ENCODE measurements at regions of chr1 and their contacts with region 1.

Region 1: GRCh38 chr1:46247436-46248121 is at the start of gene RAD54L:
- DNase-seq: peak; percentile 99
- ATAC-seq: peak; percentile 94
- H3K4me3 Mint-ChIP-seq: peak within 1 kb of the TSS; percentile 83
- H3K27ac Mint-ChIP-seq: peak within 1 kb of the TSS; percentile 92
- H3K4me1 Mint-ChIP-seq: peaks cover 20% of the 10 kb centered on the region
- H3K27me3 Mint-ChIP-seq: no peaks in the 10 kb centered on the region
- total RNA-seq, gene RAD54L: 64.2 to 73.4 TPM

Region 2: DNA sequence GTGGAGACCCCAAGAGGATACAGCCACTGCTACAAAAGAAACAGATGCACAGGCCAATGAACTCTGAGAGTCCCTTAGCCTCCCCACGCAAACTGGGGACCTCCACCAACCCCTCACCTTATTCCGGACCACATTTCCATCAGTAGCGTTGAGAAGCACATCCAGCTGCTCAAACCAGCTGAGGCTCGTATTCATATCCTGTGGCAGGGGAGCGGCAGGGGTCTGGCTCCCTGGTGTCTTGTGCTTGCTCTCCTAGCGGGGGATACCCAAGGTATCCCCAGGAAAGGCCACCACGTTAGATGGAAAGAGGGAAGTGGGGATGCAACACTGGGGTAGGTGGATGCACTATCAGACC is 748.2 kb before region 1 on chr1:
- CTCF ChIA-PET with region 1: no interaction called
- POLR2A ChIA-PET with region 1: no interaction called
- intact Hi-C with region 1: loop called in 1 of 2 experiments (anchors 1 kb)
- DNase-seq: peak; percentile 45
- ATAC-seq: no peak
- H3K4me3 Mint-ChIP-seq: peak overlapping the region; percentile 81
- H3K27ac Mint-ChIP-seq: peak overlapping the region; percentile 92
- H3K4me1 Mint-ChIP-seq: peaks cover 23% of the 10 kb centered on the region
- H3K27me3 Mint-ChIP-seq: no peaks in the 10 kb centered on the region

Region 3: GRCh38 chr1:45803301-45803780 is 444.2 kb before region 1 on chr1 and contains the start of gene MAST2:
- CTCF ChIA-PET with region 1: no interaction called
- POLR2A ChIA-PET with region 1: no interaction called
- intact Hi-C with region 1: loop called in 1 of 2 experiments (anchors 2 kb)
- DNase-seq: peak; percentile 92
- ATAC-seq: peak; percentile 96
- H3K4me3 Mint-ChIP-seq: peak within 1 kb of the TSS; percentile 98
- H3K27ac Mint-ChIP-seq: peak within 1 kb of the TSS; percentile 82
- H3K4me1 Mint-ChIP-seq: peaks cover 27% of the 10 kb centered on the region
- H3K27me3 Mint-ChIP-seq: no peaks in the 10 kb centered on the region
- total RNA-seq, gene MAST2: 20.1 to 22.9 TPM

Region 4: DNA sequence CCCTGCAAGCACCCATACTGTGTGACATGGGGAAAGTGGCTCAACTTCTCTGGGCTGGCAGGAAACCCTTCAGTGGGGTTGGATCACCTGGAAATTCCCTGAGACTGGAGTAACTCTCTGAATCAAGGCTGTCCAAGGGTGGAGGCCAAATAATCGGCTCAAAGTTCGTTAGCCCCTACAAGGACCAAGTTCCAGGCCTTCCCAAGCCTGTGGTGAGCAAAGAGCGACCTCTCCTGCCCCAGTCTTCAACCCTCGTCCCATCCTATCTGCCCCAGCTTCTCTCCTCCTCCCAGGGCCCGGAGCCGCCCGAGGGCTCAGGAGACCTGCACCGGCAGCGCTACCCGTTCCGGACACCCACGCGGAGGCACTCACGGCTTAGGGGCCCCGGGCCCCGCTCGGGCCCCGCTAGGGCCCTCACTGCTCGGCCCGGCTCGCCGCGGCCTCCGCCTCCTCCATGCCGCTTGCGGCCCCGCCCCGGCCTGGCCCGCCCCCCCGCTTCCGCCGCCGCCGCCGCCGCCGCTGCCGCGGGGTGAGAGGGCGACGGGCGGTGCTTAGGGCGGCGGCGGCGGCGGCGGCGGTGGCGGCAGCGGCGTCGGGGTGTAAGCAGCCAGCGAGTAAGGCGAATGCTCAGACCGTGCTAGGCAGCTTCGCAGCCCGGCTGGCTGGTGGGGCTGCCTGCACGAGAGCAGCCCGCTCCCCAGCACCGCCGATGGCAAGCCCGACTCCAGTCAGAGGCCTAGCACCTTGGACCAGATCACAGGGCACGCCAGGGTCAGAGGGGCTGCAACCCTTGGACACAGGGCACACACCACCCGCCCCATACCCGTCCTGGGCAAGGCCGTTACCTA is 49.4 kb before region 1 on chr1 and contains the start of gene POMGNT1:
- CTCF ChIA-PET with region 1: interaction called, 9 read pairs
- POLR2A ChIA-PET with region 1: interaction called, 6 read pairs
- intact Hi-C with region 1: loop called (anchors 1 kb)
- DNase-seq: peak; percentile 87
- ATAC-seq: peak; percentile 94
- H3K4me3 Mint-ChIP-seq: peak within 1 kb of the TSS; percentile 84
- H3K27ac Mint-ChIP-seq: peak within 1 kb of the TSS; percentile 82
- H3K4me1 Mint-ChIP-seq: peaks cover 19% of the 10 kb centered on the region
- H3K27me3 Mint-ChIP-seq: peaks cover 2% of the 10 kb centered on the region
- total RNA-seq, gene POMGNT1: 36.4 to 36.5 TPM

Region 5: GRCh38 chr1:46340404-46341221 is 93.0 kb after region 1 on chr1 and contains the start of gene NSUN4:
- CTCF ChIA-PET with region 1: interaction called, 10 read pairs
- POLR2A ChIA-PET with region 1: interaction called, 5 read pairs
- intact Hi-C with region 1: loop called (anchors 1 kb)
- DNase-seq: peak; percentile 93
- ATAC-seq: peak; percentile 94
- H3K4me3 Mint-ChIP-seq: peak within 1 kb of the TSS; percentile 87
- H3K27ac Mint-ChIP-seq: peak within 1 kb of the TSS; percentile 99
- H3K4me1 Mint-ChIP-seq: peaks cover 44% of the 10 kb centered on the region
- H3K27me3 Mint-ChIP-seq: no peaks in the 10 kb centered on the region
- total RNA-seq, gene NSUN4: 26.1 to 31.3 TPM

Region 6: DNA sequence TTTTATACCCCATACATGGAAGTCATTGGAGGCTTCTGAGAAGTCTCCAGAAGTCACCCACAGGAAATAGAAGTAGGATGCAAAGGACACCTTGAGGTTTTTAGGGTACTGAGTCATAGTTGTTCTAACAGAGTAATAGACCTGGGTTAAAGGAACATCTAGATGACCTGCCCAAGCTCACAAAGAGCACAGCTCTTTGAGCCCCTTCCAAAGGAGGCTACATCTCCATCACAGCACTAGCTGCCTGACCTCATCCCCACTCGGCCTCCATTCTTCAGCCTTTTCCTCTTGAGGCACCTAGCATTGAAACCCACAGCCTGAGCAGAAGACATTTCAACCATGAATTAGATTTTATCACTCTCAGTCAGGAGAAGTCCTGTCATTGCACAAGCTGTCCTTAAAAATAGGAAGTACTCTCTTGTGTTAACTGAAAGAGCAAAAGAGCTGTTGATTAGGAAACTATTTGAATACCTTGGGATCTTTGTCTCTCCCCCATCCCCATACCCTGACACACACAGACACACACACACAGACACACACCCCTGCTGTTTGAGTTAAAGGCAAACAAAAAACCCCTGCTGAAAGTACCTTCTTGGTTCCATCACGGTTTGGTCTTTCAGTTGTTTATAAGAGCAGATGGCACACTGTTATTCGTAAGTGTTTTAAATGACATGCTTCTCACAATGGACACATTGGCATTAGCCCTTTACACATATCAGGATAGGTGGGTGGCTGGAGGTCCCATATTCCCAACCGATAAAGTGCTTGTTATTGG is 334.3 kb after region 1 on chr1:
- CTCF ChIA-PET with region 1: no interaction called
- POLR2A ChIA-PET with region 1: no interaction called
- intact Hi-C with region 1: no loop called
- DNase-seq: peak; percentile 26
- ATAC-seq: peak; percentile 95
- H3K4me3 Mint-ChIP-seq: no peak overlapping the region
- H3K27ac Mint-ChIP-seq: peak overlapping the region; percentile 91
- H3K4me1 Mint-ChIP-seq: peaks cover 21% of the 10 kb centered on the region
- H3K27me3 Mint-ChIP-seq: no peaks in the 10 kb centered on the region

Region 7: DNA sequence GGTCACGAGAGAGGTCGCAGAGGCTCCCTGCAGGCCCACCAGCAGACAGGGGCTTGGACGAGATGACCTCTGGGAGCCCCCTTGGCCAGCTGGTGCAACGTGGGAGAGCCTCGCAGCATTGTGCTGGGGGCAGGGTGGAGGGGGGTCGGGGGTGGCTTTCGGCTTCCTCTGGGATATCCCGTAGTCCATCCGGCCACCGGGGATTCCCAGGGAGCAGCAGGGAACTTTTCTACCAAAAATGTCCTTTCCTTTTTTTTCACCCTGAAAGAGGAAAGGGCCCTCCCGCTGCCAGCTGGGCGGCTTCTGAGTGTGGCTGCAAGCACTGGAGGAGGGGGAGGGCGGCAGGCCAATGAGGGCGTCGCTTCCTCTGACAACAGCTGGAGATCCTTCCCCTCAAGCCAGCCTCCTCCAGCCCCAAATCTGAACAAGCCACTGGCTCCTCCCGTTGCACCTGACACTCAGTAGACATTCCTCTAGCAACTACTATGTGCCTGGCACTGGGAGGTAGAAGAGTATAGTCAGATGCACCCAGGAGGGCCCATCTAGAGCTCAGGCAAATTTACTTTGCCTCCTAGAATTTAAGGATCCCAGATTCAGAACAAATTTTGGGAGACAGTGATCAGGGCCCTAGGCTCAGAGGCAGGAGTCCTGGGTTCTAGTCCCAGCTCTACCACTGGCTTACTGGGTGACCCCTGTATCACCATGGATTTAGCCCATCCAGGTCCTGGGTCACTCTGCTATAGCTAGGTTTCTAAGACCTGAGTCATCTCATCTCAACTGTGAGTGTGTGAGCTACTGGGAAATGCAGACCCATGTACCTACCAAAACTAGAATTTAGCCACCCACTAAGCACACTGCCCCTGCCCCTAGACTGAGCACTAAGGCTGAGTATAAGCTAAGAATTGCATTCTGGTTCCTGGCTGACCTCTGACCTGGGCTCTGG is 366.4 kb after region 1 on chr1:
- CTCF ChIA-PET with region 1: no interaction called
- POLR2A ChIA-PET with region 1: no interaction called
- intact Hi-C with region 1: no loop called
- DNase-seq: peak; percentile 65
- ATAC-seq: peak; percentile 33
- H3K4me3 Mint-ChIP-seq: no peak overlapping the region
- H3K27ac Mint-ChIP-seq: peak overlapping the region; percentile 29
- H3K4me1 Mint-ChIP-seq: peaks cover 48% of the 10 kb centered on the region
- H3K27me3 Mint-ChIP-seq: no peaks in the 10 kb centered on the region

Region 8: GRCh38 chr1:46667782-46668760 is 420.5 kb after region 1 on chr1 and contains the start of gene ATPAF1:
- CTCF ChIA-PET with region 1: no interaction called
- POLR2A ChIA-PET with region 1: no interaction called
- intact Hi-C with region 1: loop called in 1 of 2 experiments (anchors 5 kb)
- DNase-seq: peak; percentile 84
- ATAC-seq: peak; percentile 96
- H3K4me3 Mint-ChIP-seq: no peak within 1 kb of the TSS
- H3K27ac Mint-ChIP-seq: peak within 1 kb of the TSS; percentile 75
- H3K4me1 Mint-ChIP-seq: peaks cover 19% of the 10 kb centered on the region
- H3K27me3 Mint-ChIP-seq: no peaks in the 10 kb centered on the region
- total RNA-seq, gene ATPAF1: 46.1 to 48.5 TPM